Caco-2 (cell line): ENCODE measurements at regions of chr5 and their contacts with region 1.

Region 1: GRCh38 chr5:157067005-157067404 is 8.1 kb upstream of the HAVCR1 start:
- DNase-seq: peak in 1 of 2 experiments; percentile 55
- H3K4me3 ChIP-seq: no peak overlapping the region
- H3K4me3 Mint-ChIP-seq: no peak overlapping the region
- H3K27ac Mint-ChIP-seq: peak overlapping the region; percentile 62
- H3K4me1 ChIP-seq: peaks cover 56% of the 10 kb centered on the region
- H3K4me1 Mint-ChIP-seq: peaks cover 47% of the 10 kb centered on the region
- H3K27me3 ChIP-seq: no peaks in the 10 kb centered on the region
- H3K27me3 Mint-ChIP-seq: no peaks in the 10 kb centered on the region
- CTCF ChIP-seq: no peak

Region 2: GRCh38 chr5:156800929-156801328 is 266.1 kb before region 1 on chr5:
- CTCF ChIA-PET with region 1: no interaction called
- POLR2A ChIA-PET with region 1: no interaction called
- intact Hi-C with region 1: no loop called
- DNase-seq: no peak
- H3K4me3 ChIP-seq: no peak overlapping the region
- H3K4me3 Mint-ChIP-seq: no peak overlapping the region
- H3K27ac Mint-ChIP-seq: no peak overlapping the region
- H3K4me1 ChIP-seq: no peaks in the 10 kb centered on the region
- H3K4me1 Mint-ChIP-seq: peaks cover 11% of the 10 kb centered on the region
- H3K27me3 ChIP-seq: no peaks in the 10 kb centered on the region
- H3K27me3 Mint-ChIP-seq: peaks cover 3% of the 10 kb centered on the region
- CTCF ChIP-seq: no peak

Region 3: DNA sequence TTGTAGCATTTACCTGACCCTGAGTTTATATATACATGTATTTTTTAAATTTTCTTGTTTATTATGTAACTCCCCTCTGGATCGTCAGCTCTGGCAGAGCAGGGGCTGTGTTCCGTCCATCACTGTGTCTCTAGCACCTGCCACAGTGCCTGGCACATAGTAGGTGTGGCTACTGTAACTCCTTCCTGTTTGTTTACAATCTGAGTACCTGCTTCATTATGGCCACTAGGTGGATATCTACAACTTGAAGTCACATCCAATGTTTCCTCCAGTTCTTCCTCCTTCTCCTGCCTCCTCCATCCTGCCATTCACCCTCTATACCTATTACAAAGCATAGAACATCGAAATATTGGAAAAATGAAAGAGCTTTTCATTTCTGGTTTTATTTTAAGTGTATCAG is 231.1 kb before region 1 on chr5:
- CTCF ChIA-PET with region 1: no interaction called
- POLR2A ChIA-PET with region 1: no interaction called
- intact Hi-C with region 1: loop called (anchors 1 kb)
- DNase-seq: peak in 1 of 2 experiments; percentile 29
- H3K4me3 ChIP-seq: no peak overlapping the region
- H3K4me3 Mint-ChIP-seq: no peak overlapping the region
- H3K27ac Mint-ChIP-seq: no peak overlapping the region
- H3K4me1 ChIP-seq: no peaks in the 10 kb centered on the region
- H3K4me1 Mint-ChIP-seq: peaks cover 10% of the 10 kb centered on the region
- H3K27me3 ChIP-seq: no peaks in the 10 kb centered on the region
- H3K27me3 Mint-ChIP-seq: peaks cover 4% of the 10 kb centered on the region
- CTCF ChIP-seq: peak; percentile 42 to 62

Region 4: DNA sequence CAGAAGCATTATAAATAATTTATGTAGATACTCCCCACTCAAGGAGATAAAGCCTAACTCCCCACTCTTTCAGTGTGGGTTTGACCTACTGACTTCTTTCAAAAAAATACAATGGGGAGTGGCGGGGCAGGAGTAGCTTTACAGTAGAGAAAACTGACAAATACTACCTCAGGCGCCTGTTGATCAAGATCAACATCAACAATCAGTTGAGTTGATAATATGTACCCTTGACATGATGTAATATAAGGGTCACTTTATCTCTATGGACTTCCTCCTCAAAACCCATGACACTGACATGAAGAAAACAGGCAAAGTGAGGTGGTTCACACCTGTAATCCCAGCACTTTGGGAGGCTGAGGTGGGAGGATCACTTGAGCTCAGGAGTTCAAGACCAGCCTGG is 98.2 kb before region 1 on chr5:
- CTCF ChIA-PET with region 1: no interaction called
- POLR2A ChIA-PET with region 1: interaction called, 12 read pairs
- intact Hi-C with region 1: no loop called
- DNase-seq: no peak
- H3K4me3 ChIP-seq: no peak overlapping the region
- H3K4me3 Mint-ChIP-seq: no peak overlapping the region
- H3K27ac Mint-ChIP-seq: no peak overlapping the region
- H3K4me1 ChIP-seq: no peaks in the 10 kb centered on the region
- H3K4me1 Mint-ChIP-seq: peaks cover 10% of the 10 kb centered on the region
- H3K27me3 ChIP-seq: no peaks in the 10 kb centered on the region
- H3K27me3 Mint-ChIP-seq: no peaks in the 10 kb centered on the region
- CTCF ChIP-seq: no peak

Region 5: GRCh38 chr5:157088342-157088990 is 21.5 kb after region 1 on chr5:
- CTCF ChIA-PET with region 1: no interaction called
- POLR2A ChIA-PET with region 1: no interaction called
- intact Hi-C with region 1: no loop called
- DNase-seq: no peak
- H3K4me3 ChIP-seq: no peak overlapping the region
- H3K4me3 Mint-ChIP-seq: no peak overlapping the region
- H3K27ac Mint-ChIP-seq: no peak overlapping the region
- H3K4me1 ChIP-seq: peaks cover 12% of the 10 kb centered on the region
- H3K4me1 Mint-ChIP-seq: peaks cover 15% of the 10 kb centered on the region
- H3K27me3 ChIP-seq: no peaks in the 10 kb centered on the region
- H3K27me3 Mint-ChIP-seq: no peaks in the 10 kb centered on the region
- CTCF ChIP-seq: no peak